Left cardiac atrium (tissue), 4 donors: ENCODE measurements at regions of chr10 and their contacts with region 1.

Region 1: DNA sequence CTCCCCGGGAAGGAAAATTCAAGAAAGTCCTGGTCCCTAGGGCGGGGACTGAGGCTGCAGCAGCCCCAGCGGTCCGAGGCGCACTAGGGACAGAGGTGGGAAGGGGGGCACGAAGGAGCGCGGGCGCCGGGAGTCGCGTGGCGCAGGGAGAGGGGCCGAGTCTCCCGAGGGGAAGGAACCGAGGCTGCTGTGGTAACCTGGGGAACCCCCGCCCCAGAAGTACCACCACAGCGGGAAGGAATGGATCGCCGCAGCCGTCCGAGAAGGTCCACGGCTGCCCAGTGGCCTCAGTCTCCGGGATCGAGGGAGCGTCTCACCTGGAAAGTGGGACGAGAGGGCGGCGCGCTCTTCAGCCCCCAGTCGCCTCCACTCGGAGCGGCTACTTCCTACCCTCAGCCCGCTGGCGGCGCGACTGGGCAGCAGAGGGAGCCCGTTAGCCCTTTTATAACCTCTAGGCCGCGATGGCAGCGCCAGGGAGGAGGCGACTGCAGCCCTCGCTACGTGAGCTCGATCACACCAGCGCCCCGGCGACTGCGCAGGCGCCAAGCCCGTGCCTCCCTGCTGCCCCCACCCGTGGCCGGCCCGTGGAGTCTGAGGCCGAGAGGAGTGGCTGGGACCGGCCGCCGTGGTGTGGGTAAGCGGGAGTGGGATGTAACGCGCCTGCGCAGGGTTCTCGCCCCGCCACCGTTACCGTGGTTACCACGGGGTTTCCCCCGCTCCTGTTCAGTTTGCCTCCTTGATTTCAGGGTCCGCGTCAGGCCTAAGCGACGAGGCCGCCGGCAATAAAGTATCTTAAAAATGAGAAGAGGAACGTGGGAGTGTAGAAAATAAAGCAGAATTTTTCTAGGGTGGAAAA is at the start of gene P4HA1:
- DNase-seq: peak; percentile 100
- ATAC-seq: peak; percentile 97 to 98
- total RNA-seq, gene P4HA1: 41.0 to 51.0 TPM

Region 2: DNA sequence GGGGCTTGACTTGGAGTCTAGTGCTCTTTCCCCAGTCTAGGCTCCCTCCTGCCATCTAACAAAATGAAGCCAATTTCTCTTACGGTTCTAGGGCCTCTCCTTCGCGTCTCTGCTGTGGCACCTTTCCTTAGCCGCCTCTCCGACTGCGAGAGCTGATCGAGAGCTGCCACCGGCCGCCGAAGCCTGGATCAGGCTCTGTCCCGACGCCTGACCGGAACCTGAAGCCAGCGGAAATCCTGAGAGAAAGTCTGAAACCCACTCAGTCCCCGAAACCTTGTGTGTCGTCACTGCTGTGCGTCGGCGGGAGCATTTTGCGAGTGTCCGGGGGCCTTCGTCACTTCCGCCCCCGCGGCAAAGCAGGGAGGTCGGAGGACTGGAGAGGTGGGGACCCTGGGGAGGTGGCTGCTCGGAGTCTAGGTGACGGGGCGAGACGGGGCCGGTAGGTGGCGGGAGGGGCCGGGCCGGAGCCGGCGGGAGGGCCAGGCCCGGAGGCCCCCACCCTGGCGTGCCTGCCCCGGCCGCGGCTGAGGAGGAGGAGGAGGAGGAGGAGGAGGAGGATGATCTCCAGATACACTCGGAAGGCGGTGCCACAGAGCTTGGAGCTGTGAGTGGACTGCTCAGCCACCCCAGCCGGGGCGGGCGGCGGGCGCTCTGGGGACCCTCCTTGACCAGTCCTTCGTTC is 71.2 kb after region 1 on chr10 and contains the starts of genes ECD and FAM149B1:
- intact Hi-C with region 1: loop called in 1 of 2 experiments (anchors 10 kb)
- DNase-seq: peak; percentile 96
- ATAC-seq: peak; percentile 99
- total RNA-seq, gene ECD: 17.3 to 18.2 TPM
- total RNA-seq, gene FAM149B1: 13.6 to 15.3 TPM